Calu3 (cell line): ENCODE measurements at regions of chr3 and their contacts with region 1.

Region 1: DNA sequence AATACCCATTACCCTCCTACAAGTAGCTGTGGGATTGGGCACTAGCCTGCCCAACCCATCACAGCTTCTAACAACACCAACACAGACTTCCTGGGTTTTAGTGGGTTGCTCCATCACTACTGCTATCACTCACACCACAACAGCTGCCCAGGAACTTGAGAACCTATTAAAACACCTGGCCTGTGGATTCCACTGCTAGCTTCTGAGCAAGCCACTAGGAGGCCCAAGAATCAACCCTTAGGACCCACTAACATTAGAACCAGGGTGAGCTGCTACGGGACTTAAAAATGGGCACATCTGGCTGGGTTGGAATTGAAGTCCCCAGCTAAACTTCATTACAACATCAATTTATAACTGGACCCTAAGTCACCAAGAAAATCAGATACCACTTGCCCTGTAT is 113.2 kb upstream of the TP63 start:
- DNase-seq: no peak
- H3K4me3 Mint-ChIP-seq: no peak overlapping the region
- H3K27ac Mint-ChIP-seq: no peak overlapping the region
- H3K4me1 Mint-ChIP-seq: peaks cover 15% of the 10 kb centered on the region
- H3K27me3 Mint-ChIP-seq: no peaks in the 10 kb centered on the region
- CTCF ChIP-seq: no peak

Region 2: DNA sequence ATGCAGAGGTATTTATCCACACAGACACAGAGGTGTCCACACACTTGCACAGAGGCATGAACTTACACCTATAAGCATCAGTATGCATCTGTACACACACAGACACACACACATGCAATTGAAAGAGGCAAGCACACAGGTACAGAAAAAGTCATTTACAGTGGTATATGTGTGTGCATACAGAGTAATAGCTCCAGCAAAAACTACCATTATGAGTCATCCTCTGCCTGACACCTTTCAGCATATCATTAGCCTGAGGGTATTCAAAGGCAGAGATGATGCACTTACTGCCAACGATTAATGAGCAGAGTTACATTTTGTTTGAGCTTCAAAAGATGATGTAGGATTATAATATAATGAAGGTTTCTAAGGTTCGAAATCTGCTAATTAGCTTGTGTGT is 446.5 kb before region 1 on chr3:
- CTCF ChIA-PET with region 1: no interaction called
- intact Hi-C with region 1: no loop called
- DNase-seq: no peak
- H3K4me3 Mint-ChIP-seq: no peak overlapping the region
- H3K27ac Mint-ChIP-seq: no peak overlapping the region
- H3K4me1 Mint-ChIP-seq: no peaks in the 10 kb centered on the region
- H3K27me3 Mint-ChIP-seq: no peaks in the 10 kb centered on the region
- CTCF ChIP-seq: no peak

Region 3: DNA sequence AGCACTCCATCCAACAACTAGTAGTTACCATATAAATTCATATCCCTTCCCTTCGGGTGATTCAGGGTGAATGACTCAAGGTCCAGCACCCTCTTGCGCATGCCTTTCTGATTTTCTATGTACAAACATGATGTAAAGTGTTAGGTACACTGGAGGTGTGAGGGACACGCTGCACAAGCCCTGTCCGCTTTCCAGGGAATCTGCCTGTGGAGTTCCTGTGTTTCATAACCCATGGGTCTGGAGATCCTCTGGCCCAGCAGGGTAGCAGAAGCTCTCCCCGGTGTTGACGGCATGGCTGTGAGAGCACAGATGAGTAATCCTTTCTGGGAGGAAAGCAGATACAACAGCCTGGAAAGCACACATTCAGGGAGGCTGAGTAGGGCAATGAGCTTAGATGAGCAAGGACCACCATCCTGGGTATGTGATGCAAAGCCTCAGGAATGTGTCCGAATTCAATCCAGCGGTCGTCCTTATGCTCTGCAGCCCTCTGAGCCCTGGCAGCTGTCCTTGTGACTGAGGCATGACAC is 29.7 kb before region 1 on chr3:
- CTCF ChIA-PET with region 1: no interaction called
- intact Hi-C with region 1: no loop called
- DNase-seq: no peak
- H3K4me3 Mint-ChIP-seq: no peak overlapping the region
- H3K27ac Mint-ChIP-seq: no peak overlapping the region
- H3K4me1 Mint-ChIP-seq: peaks cover 25% of the 10 kb centered on the region
- H3K27me3 Mint-ChIP-seq: no peaks in the 10 kb centered on the region
- CTCF ChIP-seq: no peak

Region 4: GRCh38 chr3:189626286-189626685 is 108.3 kb after region 1 on chr3:
- CTCF ChIA-PET with region 1: interaction called, 10 read pairs
- intact Hi-C with region 1: no loop called
- DNase-seq: no peak
- H3K4me3 Mint-ChIP-seq: no peak overlapping the region
- H3K27ac Mint-ChIP-seq: no peak overlapping the region
- H3K4me1 Mint-ChIP-seq: peaks cover 8% of the 10 kb centered on the region
- H3K27me3 Mint-ChIP-seq: no peaks in the 10 kb centered on the region
- CTCF ChIP-seq: no peak

Region 5: GRCh38 chr3:189790658-189791057 is 272.7 kb after region 1 on chr3:
- CTCF ChIA-PET with region 1: no interaction called
- intact Hi-C with region 1: no loop called
- DNase-seq: peak; percentile 23
- H3K4me3 Mint-ChIP-seq: peak overlapping the region; percentile 36
- H3K27ac Mint-ChIP-seq: peak overlapping the region; percentile 59
- H3K4me1 Mint-ChIP-seq: peaks cover 24% of the 10 kb centered on the region
- H3K27me3 Mint-ChIP-seq: no peaks in the 10 kb centered on the region
- CTCF ChIP-seq: no peak